CD14-positive monocyte (primary cell): ENCODE measurements at regions of chr11 and their contacts with region 1.

Region 1: GRCh38 chr11:95789506-95790122 is at the start of gene FAM76B:
- DNase-seq: peak; percentile 98 to 99 (median 99)
- H3K4me3 ChIP-seq: peak within 1 kb of the TSS; percentile 59 to 97 (median 77)
- H3K4me3 Mint-ChIP-seq: peak within 1 kb of the TSS; percentile 99
- H3K27ac ChIP-seq: peak within 1 kb of the TSS; percentile 98 to 99
- H3K27ac Mint-ChIP-seq: peak within 1 kb of the TSS; percentile 100
- H3K4me1 ChIP-seq: peaks cover 16 to 28% of the 10 kb centered on the region in 2 donors
- H3K4me1 Mint-ChIP-seq: peaks cover 27% of the 10 kb centered on the region
- H3K27me3 ChIP-seq: no peaks in the 10 kb centered on the region
- H3K27me3 Mint-ChIP-seq: no peaks in the 10 kb centered on the region
- CTCF ChIP-seq: no peak
- polyA plus RNA-seq, gene FAM76B: 7.8 to 46.6 (median 8.2) TPM

Region 2: DNA sequence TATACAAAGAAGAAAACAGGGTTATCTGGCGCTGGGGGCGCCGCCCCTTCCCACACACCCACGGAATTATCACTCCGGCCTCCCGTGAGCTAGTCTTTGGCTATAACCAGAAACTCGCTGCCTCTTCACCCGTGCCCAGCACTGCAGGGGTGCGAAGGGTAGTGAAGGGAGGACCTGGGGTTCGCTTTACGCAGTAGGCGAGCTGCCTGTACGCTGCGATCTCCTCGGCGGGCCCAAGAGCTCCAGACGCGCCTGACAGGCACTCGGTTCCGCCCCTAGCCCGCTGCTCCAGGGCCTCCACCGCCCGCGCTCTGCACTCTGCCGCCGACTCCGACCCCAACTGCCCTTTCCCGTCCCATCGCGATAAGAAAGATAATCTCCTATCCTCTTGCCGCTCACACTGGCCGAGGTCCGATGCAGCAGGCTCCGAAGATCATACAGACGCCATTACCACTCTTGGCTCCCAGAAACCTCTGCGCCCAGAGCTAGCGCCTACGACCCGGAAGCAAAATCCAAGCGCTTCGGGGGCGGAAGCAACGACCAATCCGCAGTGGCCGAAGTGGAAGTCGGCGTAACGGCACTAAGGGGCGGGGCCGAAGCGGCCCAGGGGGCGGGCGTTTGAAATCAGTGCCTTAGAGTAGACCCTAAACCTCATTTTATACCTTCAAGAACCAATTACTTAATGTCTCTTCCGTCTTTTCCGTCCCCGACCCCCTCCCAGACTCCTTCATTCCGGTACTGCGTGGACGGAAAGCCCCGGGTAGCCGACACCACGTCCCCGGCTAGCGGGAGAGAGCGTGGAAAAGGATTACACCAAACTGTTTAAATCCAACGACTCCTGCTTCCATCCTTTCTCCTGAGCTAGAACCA is 816.3 kb before region 1 on chr11 and contains the starts of genes CWC15 and KDM4D:
- intact Hi-C with region 1: loop called (anchors 5 kb)
- DNase-seq: peak; percentile 88 to 93 (median 88)
- H3K4me3 ChIP-seq: peak within 1 kb of the TSS; percentile 67 to 93 (median 91)
- H3K4me3 Mint-ChIP-seq: peak within 1 kb of the TSS; percentile 96 to 100
- H3K27ac ChIP-seq: peak within 1 kb of the TSS; percentile 71 to 94
- H3K27ac Mint-ChIP-seq: peak within 1 kb of the TSS; percentile 92 to 99 (median 95)
- H3K4me1 ChIP-seq: peaks cover 12 to 16% of the 10 kb centered on the region in 2 donors
- H3K4me1 Mint-ChIP-seq: peaks cover 5% of the 10 kb centered on the region
- H3K27me3 ChIP-seq: peaks cover 0 to 2% of the 10 kb centered on the region in 2 donors
- H3K27me3 Mint-ChIP-seq: peaks cover 0 to 4% (median 2%) of the 10 kb centered on the region in 3 donors
- CTCF ChIP-seq: no peak
- polyA plus RNA-seq, gene CWC15: 27.5 to 43.8 (median 38.9) TPM
- polyA plus RNA-seq, gene KDM4D: 0.03 to 0.16 TPM in 2 of 3 donors, not detected in the other

Region 3: DNA sequence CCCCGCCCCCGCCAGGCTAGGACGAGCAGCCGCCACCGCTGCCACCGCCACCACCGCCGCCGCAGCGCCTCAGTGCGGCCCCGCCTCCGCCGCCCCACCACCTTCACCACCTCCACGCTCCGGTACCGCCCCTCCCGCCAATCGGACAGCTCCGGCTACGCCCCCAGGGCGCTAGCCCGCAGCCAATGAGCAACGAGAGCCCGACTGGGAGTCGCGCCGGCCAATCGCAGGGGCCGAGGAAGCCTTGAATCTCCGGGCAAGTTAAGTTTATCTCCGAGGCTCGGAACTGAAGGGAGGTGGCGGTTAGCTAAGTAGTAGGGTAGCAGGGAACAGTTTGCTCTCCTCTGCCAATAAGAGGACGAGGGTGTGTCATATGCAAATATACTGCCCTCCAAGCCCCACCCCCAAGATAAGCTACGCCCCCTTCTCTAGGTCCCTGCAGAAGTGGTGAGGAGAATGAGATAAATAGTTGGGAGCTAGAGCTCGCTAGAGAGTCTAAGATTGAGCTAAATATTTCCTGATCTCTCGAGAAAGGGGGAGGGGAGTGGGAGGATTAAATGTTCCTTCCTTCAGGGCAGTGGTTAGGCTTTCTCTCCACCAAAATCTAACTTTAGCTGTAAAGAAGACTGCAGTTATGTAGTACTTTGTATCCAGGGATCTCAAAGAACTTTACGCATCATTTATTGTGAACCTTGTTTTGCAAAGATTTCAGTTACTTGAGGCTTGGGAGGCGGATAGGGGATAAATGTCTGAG is 558.3 kb before region 1 on chr11 and contains the start of gene SESN3:
- intact Hi-C with region 1: loop called in 1 of 2 experiments (anchors 10 kb)
- DNase-seq: peak; percentile 98
- H3K4me3 ChIP-seq: peak within 1 kb of the TSS; percentile 73 to 91 (median 90)
- H3K4me3 Mint-ChIP-seq: peak within 1 kb of the TSS in 1 of 2 donors; percentile 98
- H3K27ac ChIP-seq: peak within 1 kb of the TSS; percentile 83 to 92
- H3K27ac Mint-ChIP-seq: peak within 1 kb of the TSS; percentile 77 to 93 (median 87)
- H3K4me1 ChIP-seq: peaks cover 32 to 55% of the 10 kb centered on the region in 2 donors
- H3K4me1 Mint-ChIP-seq: peaks cover 29% of the 10 kb centered on the region
- H3K27me3 ChIP-seq: no peaks in the 10 kb centered on the region
- H3K27me3 Mint-ChIP-seq: no peaks in the 10 kb centered on the region
- CTCF ChIP-seq: no peak
- polyA plus RNA-seq, gene SESN3: 1.1 to 7.4 (median 1.4) TPM

Region 4: GRCh38 chr11:96389720-96390487 is 600.3 kb after region 1 on chr11 and contains the starts of genes CCDC82 and JRKL:
- intact Hi-C with region 1: loop called in 1 of 2 experiments (anchors 2 kb)
- DNase-seq: peak; percentile 88 to 91 (median 91)
- H3K4me3 ChIP-seq: peak within 1 kb of the TSS; percentile 52 to 93 (median 92)
- H3K4me3 Mint-ChIP-seq: peak within 1 kb of the TSS; percentile 95 to 97
- H3K27ac ChIP-seq: peak within 1 kb of the TSS; percentile 83 to 93
- H3K27ac Mint-ChIP-seq: peak within 1 kb of the TSS; percentile 94 to 99 (median 97)
- H3K4me1 ChIP-seq: peaks cover 15 to 24% of the 10 kb centered on the region in 2 donors
- H3K4me1 Mint-ChIP-seq: peaks cover 30% of the 10 kb centered on the region
- H3K27me3 ChIP-seq: no peaks in the 10 kb centered on the region
- H3K27me3 Mint-ChIP-seq: no peaks in the 10 kb centered on the region
- CTCF ChIP-seq: no peak
- polyA plus RNA-seq, gene CCDC82: 10.7 to 18.2 (median 12.2) TPM
- polyA plus RNA-seq, gene JRKL: 1.3 to 2.0 (median 1.9) TPM